Esophagus muscularis mucosa (tissue), 4 donors: ENCODE measurements at regions of chr16 and their contacts with region 1.

Region 1: GRCh38 chr16:51820176-51820575 is 669.1 kb upstream of the SALL1 start:
- DNase-seq: no peak
- H3K4me3 ChIP-seq: no peak overlapping the region
- H3K27ac ChIP-seq: no peak overlapping the region
- H3K4me1 ChIP-seq: no peaks in the 10 kb centered on the region
- H3K27me3 ChIP-seq: no peaks in the 10 kb centered on the region
- CTCF ChIP-seq: no peak
- EP300 ChIP-seq: no peak
- POLR2A ChIP-seq: no peak

Region 2: DNA sequence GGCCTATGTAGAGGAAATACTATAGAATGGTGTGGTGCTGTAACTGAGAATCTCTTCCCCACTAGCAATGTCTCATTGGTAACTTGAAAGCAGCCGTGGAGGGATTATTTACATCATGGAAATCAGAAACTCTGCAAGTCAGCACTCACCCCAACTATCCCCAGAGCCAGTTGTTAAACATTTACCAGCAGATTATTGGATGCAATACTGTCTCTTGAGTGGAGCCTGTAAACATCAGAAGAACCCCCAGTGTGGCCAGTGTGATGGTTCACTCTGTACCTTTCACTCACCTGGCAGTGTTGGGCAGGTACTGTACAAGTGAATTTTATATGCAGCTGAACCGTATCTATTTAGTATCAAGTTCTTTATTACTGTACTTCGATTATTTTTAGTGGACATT is 369.3 kb before region 1 on chr16:
- intact Hi-C with region 1: no loop called
- DNase-seq: peak; percentile 68
- H3K4me3 ChIP-seq: no peak overlapping the region
- H3K27ac ChIP-seq: no peak overlapping the region
- H3K4me1 ChIP-seq: no peaks in the 10 kb centered on the region
- H3K27me3 ChIP-seq: peaks cover 0 to 4% (median 0%) of the 10 kb centered on the region in 4 donors
- CTCF ChIP-seq: no peak
- EP300 ChIP-seq: no peak
- POLR2A ChIP-seq: no peak

Region 3: DNA sequence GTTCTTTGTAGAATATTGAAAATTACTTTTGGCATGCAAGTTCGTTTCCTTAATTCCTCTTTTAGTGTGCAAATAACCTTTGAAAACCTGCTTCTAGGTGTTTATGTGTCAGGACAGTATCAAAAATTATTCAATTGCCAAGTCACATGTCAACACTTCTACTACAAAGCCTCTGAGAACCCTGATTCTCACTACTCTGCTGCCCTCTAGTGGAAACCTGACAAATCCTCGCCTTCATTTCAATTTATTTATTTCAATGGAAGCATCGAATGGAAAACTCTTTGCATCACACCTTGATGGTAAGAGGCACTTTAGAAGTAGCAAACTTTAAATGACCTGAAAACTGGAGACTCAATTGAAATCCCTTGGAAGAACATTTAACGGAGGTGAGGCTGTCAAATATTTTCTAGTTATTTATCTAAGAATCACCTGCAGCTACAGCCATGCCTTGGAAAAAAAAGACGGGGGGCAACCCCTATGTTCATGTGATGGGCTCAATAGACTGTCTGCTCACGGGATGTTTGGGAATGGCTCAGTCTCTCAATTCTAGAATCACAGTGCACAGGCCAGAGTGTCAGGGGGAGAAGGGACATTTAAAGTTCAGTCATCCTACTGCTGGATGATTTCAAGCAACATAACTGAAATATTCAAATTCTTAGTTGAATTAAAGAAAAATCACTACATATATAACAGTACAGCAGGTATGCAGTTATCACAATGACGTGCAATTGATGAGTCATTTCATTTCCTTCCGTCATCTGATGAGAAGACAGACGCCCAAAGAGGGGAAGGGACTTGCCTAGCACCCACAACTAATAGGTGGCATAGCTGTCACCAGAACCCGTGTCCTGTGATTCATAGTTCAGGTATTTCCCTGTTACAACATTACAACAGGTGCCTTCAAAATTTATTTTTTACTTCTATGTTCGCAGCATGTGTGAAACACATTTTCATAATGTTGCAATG is 162.8 kb after region 1 on chr16:
- intact Hi-C with region 1: loop called (anchors 10 kb)
- DNase-seq: no peak
- H3K4me3 ChIP-seq: no peak overlapping the region
- H3K27ac ChIP-seq: no peak overlapping the region
- H3K4me1 ChIP-seq: no peaks in the 10 kb centered on the region
- H3K27me3 ChIP-seq: peaks cover 0 to 8% (median 0%) of the 10 kb centered on the region in 4 donors
- CTCF ChIP-seq: peak; percentile 39 to 67 (median 56)
- EP300 ChIP-seq: no peak
- POLR2A ChIP-seq: no peak